ENCODE measurements at regions of chr2 and their contacts with region 1.

Region 1: GRCh38 chr2:165544897-165545296 is 75.4 kb downstream of the CSRNP3 start:
- DNase-seq: no peak
- H3K27ac ChIP-seq: no peak overlapping the region
- CTCF ChIP-seq: no peak

Region 2: GRCh38 chr2:165667375-165667774 is 122.5 kb after region 1 on chr2:
- CTCF ChIA-PET with region 1: no interaction called
- POLR2A ChIA-PET with region 1: interaction called, 14 read pairs
- DNase-seq: no peak
- H3K27ac ChIP-seq: no peak overlapping the region
- CTCF ChIP-seq: no peak